SK-N-SH (cell line): ENCODE measurements at regions of chr15 and their contacts with region 1.

Region 1: DNA sequence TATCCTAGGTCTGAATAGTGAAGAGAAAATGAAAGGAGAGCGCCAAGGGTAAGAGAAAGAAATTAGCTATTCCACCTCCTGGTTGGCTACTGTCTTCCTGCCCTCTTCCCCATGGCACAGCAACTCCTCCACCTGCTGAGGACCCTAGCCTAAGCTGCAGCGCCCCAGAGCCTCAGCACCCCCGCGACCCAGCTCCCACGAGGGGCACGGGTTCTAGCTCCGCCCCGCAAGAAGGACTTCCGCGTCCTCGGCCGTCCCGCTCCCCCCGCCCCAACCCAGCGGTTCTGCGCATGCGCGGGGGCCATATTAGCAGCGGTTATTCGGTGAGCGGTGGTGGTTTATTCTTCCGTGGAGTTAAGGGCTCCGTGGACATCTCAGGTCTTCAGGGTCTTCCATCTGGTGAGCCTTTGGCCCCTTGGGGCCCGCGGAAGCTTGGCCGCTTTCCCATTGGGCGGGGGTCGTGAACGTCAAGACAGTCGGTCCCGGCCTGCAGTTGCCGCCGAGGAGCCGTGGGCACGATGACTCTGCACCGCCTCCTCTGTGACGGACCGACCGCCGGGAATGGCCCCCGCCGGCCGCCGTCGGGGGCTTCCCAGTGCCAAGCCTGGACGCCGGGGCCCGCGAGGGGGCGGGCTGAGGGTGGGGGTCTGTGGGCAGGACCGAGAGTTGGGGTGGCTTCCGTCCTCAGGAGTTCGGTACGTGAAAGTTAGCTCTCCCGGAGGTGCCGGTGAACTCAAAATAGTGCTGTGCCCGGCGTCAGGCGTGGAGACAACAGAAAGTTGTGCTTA is at the start of gene PSMA4:
- DNase-seq: peak; percentile 98
- H3K4me3 ChIP-seq: peak within 1 kb of the TSS; percentile 81 to 83
- H3K27ac ChIP-seq: peak within 1 kb of the TSS; percentile 92 to 97
- H3K4me1 ChIP-seq: peaks cover 4 to 5% of the 10 kb centered on the region in 2 experiments; a peak in 2 of 4 replicates
- H3K27me3 ChIP-seq: no peaks in the 10 kb centered on the region
- CTCF ChIP-seq: 0 out of 2 replicates have a peak, but pooled peaks have one; percentile 16
- EP300 ChIP-seq: no peak
- RAD21 ChIP-seq: no peak
- polyA plus RNA-seq, gene PSMA4: 212 and 251 TPM in 2 replicates

Region 2: DNA sequence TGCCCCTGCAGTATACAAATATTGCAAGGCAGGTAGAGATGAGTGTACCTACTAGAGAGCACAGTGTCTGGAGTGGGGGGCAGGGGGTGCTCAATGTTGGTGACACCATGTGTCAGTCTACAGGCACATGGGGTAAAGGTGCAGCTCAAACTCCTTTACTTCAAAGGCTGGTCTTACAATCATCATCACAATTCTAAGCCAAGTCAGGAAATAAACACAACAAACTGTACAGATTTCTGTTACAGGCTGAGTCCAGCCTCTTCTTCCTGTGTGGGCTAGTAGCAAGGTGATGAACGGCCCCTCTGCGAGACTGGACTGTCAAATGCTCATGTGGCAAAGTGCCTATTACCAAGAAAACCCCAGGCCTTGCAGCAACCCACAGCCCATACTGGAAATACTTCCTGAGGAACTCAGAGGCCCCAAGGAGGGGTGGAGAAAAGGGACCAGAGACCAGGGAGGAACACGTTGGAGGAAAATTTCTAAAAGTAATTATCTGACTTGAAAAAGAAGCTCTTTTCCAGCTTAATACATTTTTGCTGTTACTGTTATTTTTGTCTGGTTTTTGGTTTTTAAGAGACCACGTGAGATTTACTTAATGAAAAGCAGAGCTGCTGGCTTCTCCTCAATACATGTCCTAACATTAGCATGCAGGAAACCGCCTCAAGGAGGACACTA is 492.5 kb before region 1 on chr15:
- CTCF ChIA-PET with region 1: no interaction called
- POLR2A ChIA-PET with region 1: no interaction called
- DNase-seq: no peak
- H3K4me3 ChIP-seq: no peak overlapping the region
- H3K27ac ChIP-seq: peak overlapping the region; percentile 30 to 88; a peak in 3 of 4 replicates
- H3K4me1 ChIP-seq: peaks cover 44 to 56% of the 10 kb centered on the region in 2 experiments
- H3K27me3 ChIP-seq: no peaks in the 10 kb centered on the region
- CTCF ChIP-seq: no peak
- EP300 ChIP-seq: no peak
- RAD21 ChIP-seq: no peak

Region 3: GRCh38 chr15:78565097-78565951 is 25.0 kb after region 1 on chr15 and contains the start of gene CHRNA5:
- CTCF ChIA-PET with region 1: interaction called, 12 read pairs
- POLR2A ChIA-PET with region 1: interaction called, 17 read pairs
- DNase-seq: peak; percentile 94
- H3K4me3 ChIP-seq: peak within 1 kb of the TSS; percentile 73 to 80
- H3K27ac ChIP-seq: peak within 1 kb of the TSS; percentile 48 to 90
- H3K4me1 ChIP-seq: peaks cover 0 to 13% of the 10 kb centered on the region in 2 experiments; a peak in 2 of 4 replicates
- H3K27me3 ChIP-seq: no peaks in the 10 kb centered on the region
- CTCF ChIP-seq: no peak
- EP300 ChIP-seq: peak in 1 of 2 experiments; percentile 65; a peak in 1 of 4 replicates
- RAD21 ChIP-seq: no peak
- polyA plus RNA-seq, gene CHRNA5: 5.3 and 5.5 TPM in 2 replicates